Mammary epithelial cell (primary cell): ENCODE measurements at regions of chr5 and their contacts with region 1.

Region 1: GRCh38 chr5:1641560-1642166 is 117.9 kb upstream of the LPCAT1 start:
- DNase-seq: peak; percentile 75
- H3K4me3 ChIP-seq: no peak overlapping the region
- H3K27ac ChIP-seq: no peak overlapping the region
- H3K4me1 ChIP-seq: peaks cover 6% of the 10 kb centered on the region
- H3K27me3 ChIP-seq: peaks cover 15% of the 10 kb centered on the region
- CTCF ChIP-seq: peak; percentile 97 to 98

Region 2: GRCh38 chr5:932628-933250 is 708.9 kb before region 1 on chr5:
- CTCF ChIA-PET with region 1: no interaction called
- dilution Hi-C with region 1: loop called (anchors 25 kb)
- in situ Hi-C with region 1: loop called (anchors 10 to 25 kb)
- intact Hi-C with region 1: no loop called
- DNase-seq: no peak
- H3K4me3 ChIP-seq: no peak overlapping the region
- H3K27ac ChIP-seq: no peak overlapping the region
- H3K4me1 ChIP-seq: no peaks in the 10 kb centered on the region
- H3K27me3 ChIP-seq: no peaks in the 10 kb centered on the region
- CTCF ChIP-seq: no peak

Region 3: DNA sequence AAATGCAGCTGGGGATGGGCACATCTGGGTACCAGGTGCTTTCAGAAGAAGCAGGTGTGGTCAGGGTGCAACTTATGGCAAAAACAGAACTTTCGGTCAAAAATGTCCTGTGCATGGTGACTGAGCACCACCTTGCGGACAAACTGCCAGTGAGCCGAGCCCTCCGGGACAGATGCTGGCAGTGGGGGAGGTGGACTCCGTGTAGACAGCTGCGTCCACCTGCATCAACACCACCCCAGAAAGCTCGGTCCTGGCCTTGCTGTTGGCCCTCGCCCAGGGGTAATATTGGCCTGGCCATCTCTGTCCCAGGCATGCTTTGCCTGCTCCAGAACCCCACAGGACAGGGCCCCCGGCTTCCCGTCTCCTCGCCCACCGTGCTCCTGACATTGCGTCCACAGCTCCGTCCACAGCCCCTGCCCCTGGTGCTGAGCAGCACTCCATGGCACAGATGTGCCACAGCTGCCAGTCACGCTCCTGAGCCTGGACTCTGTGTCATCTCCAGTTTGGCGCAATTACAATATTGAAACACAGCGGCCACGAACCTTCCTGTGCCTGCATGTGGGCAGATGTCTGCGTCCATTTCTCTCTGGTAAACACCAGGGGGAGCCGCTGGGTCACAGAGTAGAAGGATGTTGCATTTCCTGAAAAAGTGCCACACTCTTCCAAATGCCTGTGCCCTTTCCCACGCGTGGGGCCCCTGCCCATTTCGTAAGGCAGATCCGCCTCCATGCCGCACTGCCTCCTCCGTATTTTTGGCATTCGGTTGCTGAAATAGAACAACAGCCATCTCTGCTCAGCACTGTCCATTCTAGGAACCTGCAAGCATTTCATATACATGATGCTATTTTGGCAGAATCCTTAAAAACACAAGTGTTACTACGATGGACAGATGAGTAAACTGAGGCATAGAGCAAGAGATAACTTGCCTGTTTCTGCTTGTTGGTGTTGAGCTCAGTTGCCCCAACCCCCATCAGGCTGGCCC is 473.6 kb before region 1 on chr5:
- CTCF ChIA-PET with region 1: no interaction called
- dilution Hi-C with region 1: no loop called
- in situ Hi-C with region 1: loop called (anchors 10 to 25 kb)
- intact Hi-C with region 1: loop called (anchors 1 kb)
- DNase-seq: peak; percentile 56
- H3K4me3 ChIP-seq: no peak overlapping the region
- H3K27ac ChIP-seq: no peak overlapping the region
- H3K4me1 ChIP-seq: no peaks in the 10 kb centered on the region
- H3K27me3 ChIP-seq: no peaks in the 10 kb centered on the region
- CTCF ChIP-seq: peak; percentile 66 to 80

Region 4: GRCh38 chr5:1344975-1345838 is 296.5 kb before region 1 on chr5 and contains the start of gene CLPTM1L:
- CTCF ChIA-PET with region 1: no interaction called
- dilution Hi-C with region 1: no loop called
- in situ Hi-C with region 1: no loop called
- intact Hi-C with region 1: loop called (anchors 2 kb)
- DNase-seq: peak; percentile 81
- H3K4me3 ChIP-seq: peak within 1 kb of the TSS; percentile 80 to 91 (median 87)
- H3K27ac ChIP-seq: peak within 1 kb of the TSS; percentile 78
- H3K4me1 ChIP-seq: peaks cover 18% of the 10 kb centered on the region
- H3K27me3 ChIP-seq: no peaks in the 10 kb centered on the region
- CTCF ChIP-seq: no peak
- total RNA-seq, gene CLPTM1L: 111 to 154 TPM

Region 5: DNA sequence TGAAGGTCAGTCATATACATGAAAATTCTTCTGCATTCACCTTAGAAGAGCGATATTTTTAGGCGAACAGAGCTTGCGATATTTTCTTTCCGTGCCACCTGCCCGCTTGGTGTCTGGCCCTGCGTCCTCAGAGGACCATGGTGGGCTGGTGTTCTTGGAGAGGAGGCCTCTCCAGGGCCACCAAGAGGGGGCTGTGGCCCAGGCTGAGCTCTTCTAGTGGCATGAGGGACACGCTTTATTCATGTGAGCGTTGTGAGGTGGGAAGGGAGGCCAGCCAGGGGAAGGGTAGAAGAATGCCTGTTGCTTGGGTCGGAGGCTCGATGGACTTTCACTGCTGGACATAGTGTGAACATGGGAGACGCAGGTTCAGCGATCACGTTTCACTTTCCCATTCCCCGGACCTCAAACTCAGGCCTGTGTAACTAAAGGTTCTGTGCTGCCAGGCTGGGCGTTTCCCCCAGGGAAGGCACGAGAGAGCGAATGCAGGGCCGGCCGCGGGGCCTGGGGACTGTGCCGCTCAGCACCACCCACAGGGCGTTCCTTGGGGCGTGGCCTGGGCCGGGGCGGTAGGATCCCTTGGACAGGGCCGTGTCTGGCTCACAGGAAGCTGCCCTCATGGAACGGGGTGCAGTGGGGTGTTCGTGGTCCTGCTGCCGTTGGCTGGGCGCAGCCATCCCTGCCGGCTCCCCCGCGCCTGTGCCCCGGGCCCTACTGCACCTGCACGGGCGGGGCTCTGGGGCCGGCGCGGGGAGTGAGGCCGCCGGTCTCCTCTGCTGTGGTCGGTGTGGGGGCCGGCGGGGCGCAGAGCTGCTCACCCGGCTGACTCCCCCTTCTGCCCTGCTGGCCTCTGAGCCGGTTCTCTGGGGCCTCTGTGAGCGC is 256.0 kb before region 1 on chr5:
- CTCF ChIA-PET with region 1: no interaction called
- dilution Hi-C with region 1: no loop called
- in situ Hi-C with region 1: loop called in 1 of 2 experiments (anchors 25 kb)
- intact Hi-C with region 1: loop called (anchors 2 kb)
- DNase-seq: peak; percentile 33
- H3K4me3 ChIP-seq: peak overlapping the region; percentile 53 to 60 (median 57)
- H3K27ac ChIP-seq: no peak overlapping the region
- H3K4me1 ChIP-seq: peaks cover 14% of the 10 kb centered on the region
- H3K27me3 ChIP-seq: no peaks in the 10 kb centered on the region
- CTCF ChIP-seq: no peak

Region 6: DNA sequence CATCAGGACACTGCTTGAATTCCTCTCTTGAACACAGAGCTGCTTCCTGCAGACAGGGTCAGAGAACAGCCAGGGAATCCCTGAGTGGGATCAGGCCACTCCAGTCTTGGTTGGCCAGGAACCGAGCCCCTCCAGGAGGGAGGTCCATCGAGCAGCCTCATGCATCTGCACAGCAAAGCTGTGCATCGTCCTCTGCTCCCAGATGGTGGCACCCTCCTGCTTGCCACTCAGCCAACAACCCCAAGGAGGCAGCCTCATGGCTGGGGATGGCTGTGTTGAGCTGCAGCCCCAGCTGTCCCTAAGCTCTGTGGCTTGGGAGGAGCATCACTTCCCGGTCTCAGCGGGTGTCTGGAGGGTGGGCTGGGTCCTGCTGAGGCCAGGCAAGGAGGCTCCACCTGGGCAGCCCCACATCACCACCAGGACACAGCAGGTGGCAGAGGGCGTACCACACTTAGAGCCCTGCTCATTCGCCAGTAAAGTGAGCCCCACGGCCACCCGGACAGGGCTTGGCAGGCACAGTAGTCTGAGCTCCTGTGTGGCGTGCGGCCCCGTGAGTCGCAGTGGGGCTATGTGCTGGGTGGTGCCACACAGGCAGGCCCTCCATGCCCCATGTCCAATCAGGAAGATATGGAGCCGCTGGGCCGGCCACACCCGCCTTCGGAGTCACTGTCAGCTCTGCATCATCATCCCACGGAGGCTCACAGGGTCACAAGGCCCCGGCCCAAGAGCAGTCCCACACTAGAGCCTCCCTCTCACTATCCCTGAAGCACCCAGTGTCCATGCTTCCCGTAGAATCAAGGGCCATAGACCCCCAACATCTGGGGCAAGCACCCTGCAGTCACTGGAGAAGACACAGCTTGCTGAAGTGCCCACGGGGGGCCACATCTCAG is 129.8 kb before region 1 on chr5:
- CTCF ChIA-PET with region 1: no interaction called
- dilution Hi-C with region 1: no loop called
- in situ Hi-C with region 1: no loop called
- intact Hi-C with region 1: loop called (anchors 1 kb)
- DNase-seq: peak; percentile 47
- H3K4me3 ChIP-seq: no peak overlapping the region
- H3K27ac ChIP-seq: no peak overlapping the region
- H3K4me1 ChIP-seq: peaks cover 22% of the 10 kb centered on the region
- H3K27me3 ChIP-seq: no peaks in the 10 kb centered on the region
- CTCF ChIP-seq: peak in 1 of 2 donors; percentile 44